ENCODE measurements at regions of chr9 and their contacts with region 1.

Region 1: DNA sequence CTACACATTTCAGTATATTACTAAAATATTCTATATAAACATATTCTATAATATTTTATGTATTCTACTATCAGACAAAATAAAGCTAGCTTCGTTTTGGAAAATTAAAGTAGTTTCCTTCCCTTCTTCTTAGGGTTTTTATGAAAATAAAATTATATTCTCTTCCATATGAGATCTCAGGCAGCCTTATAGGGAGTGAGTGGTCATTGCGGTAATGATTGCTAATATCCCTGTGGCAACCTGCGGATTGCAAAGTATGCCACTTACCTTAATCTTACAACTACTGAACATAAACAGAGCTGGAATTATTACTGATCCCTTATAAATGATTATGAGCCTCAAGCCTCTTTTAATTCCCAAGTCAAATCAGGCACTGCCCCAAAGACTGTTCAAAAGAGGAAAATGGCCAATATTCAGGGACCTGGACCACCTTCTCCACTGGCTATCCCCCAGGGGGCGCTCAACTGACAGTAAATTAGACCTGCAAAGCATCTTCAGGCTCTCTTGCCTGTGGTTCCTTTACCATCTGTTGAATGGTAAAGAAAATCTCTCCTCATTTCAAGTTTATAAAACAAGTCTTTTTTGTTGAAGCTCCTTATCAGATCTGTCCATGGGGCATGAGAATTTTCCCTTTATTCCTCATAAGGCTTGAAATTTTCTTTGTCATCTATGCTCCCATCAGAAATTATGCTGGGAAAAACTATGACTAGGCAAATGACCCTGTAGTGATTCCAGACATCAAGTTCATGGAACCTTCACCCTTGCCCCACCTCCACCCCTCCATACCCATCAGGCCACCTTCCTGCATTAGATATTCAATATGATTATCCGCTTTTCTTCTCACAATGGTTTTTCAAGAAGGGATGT is 163.9 kb downstream of the CEMIP2 start:
- DNase-seq: peak; percentile 52 to 80 (median 75)
- ATAC-seq: peak; percentile 89
- H3K4me3 ChIP-seq: no peak overlapping the region
- H3K4me3 Mint-ChIP-seq: no peak overlapping the region
- H3K27ac ChIP-seq: no peak overlapping the region
- H3K27ac Mint-ChIP-seq: no peak overlapping the region
- H3K4me1 ChIP-seq: no peaks in the 10 kb centered on the region
- H3K4me1 Mint-ChIP-seq: peaks cover 0 to 4% (median 0%) of the 10 kb centered on the region in 7 donors
- H3K27me3 ChIP-seq: peaks cover 0 to 3% of the 10 kb centered on the region in 2 donors
- H3K27me3 Mint-ChIP-seq: peaks cover 0 to 29% (median 0%) of the 10 kb centered on the region in 5 donors

Region 2: GRCh38 chr9:71048280-71048679 is 556.1 kb before region 1 on chr9:
- CTCF ChIA-PET with region 1: no interaction called
- POLR2A ChIA-PET with region 1: no interaction called
- intact Hi-C with region 1: no loop called
- DNase-seq: no peak
- ATAC-seq: no peak
- H3K4me3 ChIP-seq: no peak overlapping the region
- H3K4me3 Mint-ChIP-seq: no peak overlapping the region
- H3K27ac ChIP-seq: no peak overlapping the region
- H3K27ac Mint-ChIP-seq: no peak overlapping the region
- H3K4me1 ChIP-seq: no peaks in the 10 kb centered on the region
- H3K4me1 Mint-ChIP-seq: no peaks in the 10 kb centered on the region
- H3K27me3 ChIP-seq: no peaks in the 10 kb centered on the region
- H3K27me3 Mint-ChIP-seq: peaks cover 0 to 5% (median 4%) of the 10 kb centered on the region in 5 donors

Region 3: DNA sequence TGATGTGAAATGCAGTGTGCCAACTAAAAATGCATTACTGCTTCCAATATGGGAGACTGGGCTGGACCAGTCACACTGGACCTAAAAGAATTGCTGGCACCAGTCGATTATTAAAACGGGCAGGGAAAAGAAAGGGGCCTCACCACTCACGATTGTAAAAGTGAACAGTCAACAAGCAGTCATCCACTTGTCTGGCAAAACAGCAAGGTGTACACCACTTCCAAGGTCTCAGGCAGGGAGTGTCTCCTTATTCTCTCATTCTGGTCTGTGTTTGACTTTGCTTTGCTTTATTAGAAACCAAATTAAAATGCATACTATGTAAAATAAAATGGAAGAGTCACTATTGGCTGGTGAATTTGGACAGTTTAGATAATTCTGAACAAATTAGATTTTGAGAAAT is 425.2 kb before region 1 on chr9:
- CTCF ChIA-PET with region 1: no interaction called
- POLR2A ChIA-PET with region 1: no interaction called
- intact Hi-C with region 1: no loop called
- DNase-seq: no peak
- ATAC-seq: no peak
- H3K4me3 ChIP-seq: no peak overlapping the region
- H3K4me3 Mint-ChIP-seq: no peak overlapping the region
- H3K27ac ChIP-seq: no peak overlapping the region
- H3K27ac Mint-ChIP-seq: no peak overlapping the region
- H3K4me1 ChIP-seq: no peaks in the 10 kb centered on the region
- H3K4me1 Mint-ChIP-seq: no peaks in the 10 kb centered on the region
- H3K27me3 ChIP-seq: no peaks in the 10 kb centered on the region
- H3K27me3 Mint-ChIP-seq: peaks cover 0 to 9% (median 4%) of the 10 kb centered on the region in 5 donors

Region 4: DNA sequence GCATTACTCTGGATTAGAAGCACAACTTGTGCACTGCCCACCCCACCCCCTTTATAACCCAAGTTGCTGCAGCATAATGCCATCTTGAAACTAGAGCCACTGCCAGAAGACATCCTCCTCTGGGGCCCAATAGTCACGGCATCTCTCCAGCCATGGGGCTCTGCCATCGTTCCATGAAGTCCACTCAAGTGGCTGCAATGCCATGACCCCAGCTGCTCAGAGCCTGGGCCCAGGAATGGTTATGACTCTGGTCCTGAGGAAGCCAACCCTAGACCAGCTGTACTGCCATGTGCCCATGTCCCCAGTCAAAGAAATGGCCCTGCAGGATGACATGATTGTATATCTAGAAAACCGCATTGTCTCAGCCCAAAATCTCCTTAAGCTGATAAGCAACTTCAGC is 108.1 kb before region 1 on chr9:
- CTCF ChIA-PET with region 1: no interaction called
- POLR2A ChIA-PET with region 1: no interaction called
- intact Hi-C with region 1: no loop called
- DNase-seq: no peak
- ATAC-seq: no peak
- H3K4me3 ChIP-seq: no peak overlapping the region
- H3K4me3 Mint-ChIP-seq: no peak overlapping the region
- H3K27ac ChIP-seq: no peak overlapping the region
- H3K27ac Mint-ChIP-seq: no peak overlapping the region
- H3K4me1 ChIP-seq: no peaks in the 10 kb centered on the region
- H3K4me1 Mint-ChIP-seq: no peaks in the 10 kb centered on the region
- H3K27me3 ChIP-seq: peaks cover 0 to 3% of the 10 kb centered on the region in 2 donors
- H3K27me3 Mint-ChIP-seq: peaks cover 9 to 51% (median 24%) of the 10 kb centered on the region in 5 donors

Region 5: DNA sequence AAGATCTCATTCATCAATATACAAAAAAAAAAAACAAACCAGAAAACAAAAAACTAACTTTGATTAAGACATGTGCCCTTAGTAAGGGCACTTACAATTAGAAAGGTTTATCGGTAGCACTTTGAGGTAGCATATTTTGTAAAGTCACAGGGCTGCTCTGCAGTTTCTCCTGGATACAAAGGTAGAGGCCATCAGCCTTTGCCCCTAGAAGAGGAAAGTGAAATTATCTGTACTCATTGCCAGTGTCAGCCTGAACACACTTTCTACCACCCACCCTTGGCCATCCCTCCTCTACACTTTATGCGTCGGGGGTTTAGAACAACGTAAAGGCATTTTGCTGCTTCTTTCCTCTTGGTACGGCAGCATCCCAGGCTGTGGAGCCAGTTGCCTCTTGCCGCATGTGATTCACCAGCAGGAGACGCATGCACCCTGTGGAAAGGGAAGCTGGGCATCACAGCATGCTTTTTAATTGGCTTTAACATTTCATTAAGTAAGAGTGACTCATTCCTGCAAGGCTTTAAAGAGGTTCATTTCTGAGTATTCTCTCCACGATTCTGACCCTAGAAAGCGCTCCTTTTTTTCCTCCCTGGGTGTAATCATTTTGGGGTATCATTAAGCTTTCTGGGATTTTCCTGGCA is 79.3 kb after region 1 on chr9:
- CTCF ChIA-PET with region 1: interaction called, 11 read pairs
- POLR2A ChIA-PET with region 1: no interaction called
- intact Hi-C with region 1: no loop called
- DNase-seq: no peak
- ATAC-seq: peak; percentile 64
- H3K4me3 ChIP-seq: no peak overlapping the region
- H3K4me3 Mint-ChIP-seq: peak overlapping the region in 6 of 10 donors; percentile 9 to 72 (median 37)
- H3K27ac ChIP-seq: no peak overlapping the region
- H3K27ac Mint-ChIP-seq: peak overlapping the region in 4 of 9 donors; percentile 26 to 70 (median 60)
- H3K4me1 ChIP-seq: peaks cover 20 to 31% of the 10 kb centered on the region in 2 donors
- H3K4me1 Mint-ChIP-seq: peaks cover 30 to 62% (median 57%) of the 10 kb centered on the region in 7 donors
- H3K27me3 ChIP-seq: no peaks in the 10 kb centered on the region
- H3K27me3 Mint-ChIP-seq: no peaks in the 10 kb centered on the region

Region 6: DNA sequence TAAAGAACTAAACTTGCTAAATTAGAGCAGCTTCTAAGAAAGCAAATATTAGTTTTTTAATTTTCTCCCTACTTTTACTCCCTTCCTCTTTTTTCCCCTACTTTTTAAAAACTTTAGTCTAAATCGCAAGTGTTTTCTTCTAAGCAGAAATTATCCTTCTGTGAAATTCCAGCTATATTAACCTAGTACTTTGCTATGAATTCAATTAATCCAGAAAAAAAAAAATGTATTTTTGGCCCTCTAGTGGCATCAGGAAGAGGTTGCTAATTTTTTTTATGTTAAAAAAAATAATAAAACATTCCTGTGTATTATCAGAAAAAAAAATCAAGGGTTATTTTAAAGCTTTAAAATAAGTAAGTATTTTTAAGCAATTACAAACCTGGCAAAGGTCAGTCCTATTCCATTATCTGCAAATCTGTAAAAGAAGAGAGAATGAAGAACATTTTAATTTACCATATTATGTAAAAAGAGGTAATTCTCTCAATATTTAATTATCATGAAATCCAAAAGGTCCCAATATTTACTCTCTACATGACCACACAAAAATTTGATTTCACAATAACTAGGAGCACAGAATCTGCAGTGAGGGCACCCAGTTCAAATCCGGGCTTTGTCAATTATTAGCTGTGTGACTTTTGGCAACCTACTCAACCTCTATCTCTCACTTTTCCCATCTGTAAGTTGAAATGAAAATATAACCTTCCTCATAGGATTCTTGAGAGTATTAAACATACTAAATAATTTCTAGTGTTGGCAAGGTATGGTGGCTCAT is 111.9 kb after region 1 on chr9:
- CTCF ChIA-PET with region 1: interaction called, 12 read pairs
- POLR2A ChIA-PET with region 1: no interaction called
- intact Hi-C with region 1: loop called (anchors 1 to 5 kb)
- DNase-seq: peak in 1 of 9 donors; percentile 10
- ATAC-seq: no peak
- H3K4me3 ChIP-seq: no peak overlapping the region
- H3K4me3 Mint-ChIP-seq: no peak overlapping the region
- H3K27ac ChIP-seq: no peak overlapping the region
- H3K27ac Mint-ChIP-seq: no peak overlapping the region
- H3K4me1 ChIP-seq: no peaks in the 10 kb centered on the region
- H3K4me1 Mint-ChIP-seq: peaks cover 9 to 19% (median 16%) of the 10 kb centered on the region in 7 donors
- H3K27me3 ChIP-seq: no peaks in the 10 kb centered on the region
- H3K27me3 Mint-ChIP-seq: no peaks in the 10 kb centered on the region

Region 7: DNA sequence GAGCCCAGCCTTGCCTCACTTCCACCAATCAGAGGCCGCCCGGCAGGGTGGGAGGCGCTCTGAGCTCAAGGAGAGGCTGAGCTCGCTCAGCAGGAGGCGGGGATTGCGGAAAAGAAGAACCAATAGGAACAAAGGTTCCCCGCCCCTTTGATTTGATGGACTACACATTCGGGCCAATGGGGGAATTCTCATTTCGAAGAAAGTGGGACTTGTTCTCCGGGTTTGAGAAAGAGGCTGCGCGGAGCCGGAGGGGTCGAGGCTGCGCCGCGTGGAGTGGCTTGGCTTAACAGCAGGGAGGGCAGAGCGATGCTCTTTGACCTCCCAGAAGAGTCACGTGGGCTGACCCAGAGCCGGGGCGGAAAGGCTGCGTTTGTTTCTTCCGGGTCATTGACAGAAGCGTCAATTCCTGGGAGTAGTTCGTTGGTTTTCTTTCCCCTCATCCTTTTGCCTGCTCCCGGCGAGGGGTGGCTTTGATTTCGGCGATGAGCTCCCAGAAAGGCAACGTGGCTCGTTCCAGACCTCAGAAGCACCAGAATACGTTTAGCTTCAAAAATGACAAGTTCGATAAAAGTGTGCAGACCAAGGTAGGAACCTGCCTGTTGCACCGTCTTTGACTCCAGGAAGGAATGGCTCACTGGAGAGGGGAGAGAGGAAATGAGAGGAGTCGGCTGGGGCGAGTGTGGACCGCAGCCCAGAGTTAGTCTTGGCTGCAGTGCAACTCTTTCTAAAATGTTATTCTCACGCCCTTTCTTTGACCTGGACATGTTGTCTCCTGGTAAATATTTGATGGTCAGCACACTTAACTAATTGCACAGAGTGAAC is 307.0 kb after region 1 on chr9 and contains the start of gene C9orf85:
- CTCF ChIA-PET with region 1: interaction called, 3 read pairs
- POLR2A ChIA-PET with region 1: no interaction called
- intact Hi-C with region 1: loop called in 1 of 2 experiments (anchors 5 kb)
- DNase-seq: peak; percentile 84 to 98 (median 95)
- ATAC-seq: peak; percentile 96
- H3K4me3 ChIP-seq: peak within 1 kb of the TSS; percentile 83
- H3K4me3 Mint-ChIP-seq: peak within 1 kb of the TSS; percentile 95 to 100 (median 100)
- H3K27ac ChIP-seq: peak within 1 kb of the TSS; percentile 74
- H3K27ac Mint-ChIP-seq: peak within 1 kb of the TSS; percentile 90 to 99 (median 95)
- H3K4me1 ChIP-seq: peaks cover 15 to 22% of the 10 kb centered on the region in 2 donors
- H3K4me1 Mint-ChIP-seq: peaks cover 47 to 80% (median 67%) of the 10 kb centered on the region in 7 donors
- H3K27me3 ChIP-seq: peaks cover 0 to 3% of the 10 kb centered on the region in 2 donors
- H3K27me3 Mint-ChIP-seq: no peaks in the 10 kb centered on the region
- total RNA-seq, gene C9orf85: 4.8 to 10.3 (median 8.6) TPM

Region 8: DNA sequence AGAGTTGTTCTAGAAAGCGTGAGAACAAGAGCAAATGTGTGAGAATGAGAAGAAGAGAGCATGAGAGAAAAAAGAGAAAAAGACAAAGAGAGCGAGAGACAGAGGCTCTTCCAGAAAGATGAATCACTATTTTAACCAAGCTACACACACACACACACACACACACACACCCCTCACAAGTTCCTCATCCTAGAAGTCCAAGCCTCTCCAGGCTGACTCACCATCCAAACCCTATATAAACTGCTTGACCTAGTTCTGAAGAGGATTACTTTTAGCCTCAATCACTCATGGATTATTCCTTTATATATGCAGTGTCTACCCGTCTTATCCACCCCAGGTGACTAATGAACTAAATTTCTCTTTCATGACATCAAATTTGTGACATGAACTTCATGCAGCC is 418.4 kb after region 1 on chr9:
- CTCF ChIA-PET with region 1: interaction called, 37 read pairs
- POLR2A ChIA-PET with region 1: no interaction called
- intact Hi-C with region 1: loop called (anchors 1 to 2 kb)
- DNase-seq: no peak
- ATAC-seq: peak; percentile 64
- H3K4me3 ChIP-seq: no peak overlapping the region
- H3K4me3 Mint-ChIP-seq: no peak overlapping the region
- H3K27ac ChIP-seq: no peak overlapping the region
- H3K27ac Mint-ChIP-seq: no peak overlapping the region
- H3K4me1 ChIP-seq: no peaks in the 10 kb centered on the region
- H3K4me1 Mint-ChIP-seq: no peaks in the 10 kb centered on the region
- H3K27me3 ChIP-seq: no peaks in the 10 kb centered on the region
- H3K27me3 Mint-ChIP-seq: no peaks in the 10 kb centered on the region